Vagina (tissue), 2 donors: ENCODE measurements at regions of chr9 and their contacts with region 1.

Region 1: GRCh38 chr9:34611829-34612630 is at the start of gene RPP25L:
- DNase-seq: no peak
- H3K4me3 ChIP-seq: peak within 1 kb of the TSS; percentile 75 to 85
- H3K27ac ChIP-seq: peak within 1 kb of the TSS; percentile 94
- H3K4me1 ChIP-seq: peaks cover 23% of the 10 kb centered on the region
- H3K27me3 ChIP-seq: no peaks in the 10 kb centered on the region
- CTCF ChIP-seq: no peak
- POLR2A ChIP-seq: peak in 1 of 2 donors; percentile 82
- total RNA-seq, gene RPP25L: 31.4 TPM

Region 2: GRCh38 chr9:34446468-34446891 is 165.6 kb before region 1 on chr9:
- intact Hi-C with region 1: no loop called
- DNase-seq: no peak
- H3K4me3 ChIP-seq: no peak overlapping the region
- H3K27ac ChIP-seq: no peak overlapping the region
- H3K4me1 ChIP-seq: peaks cover 17% of the 10 kb centered on the region
- H3K27me3 ChIP-seq: no peaks in the 10 kb centered on the region
- CTCF ChIP-seq: no peak
- POLR2A ChIP-seq: no peak

Region 3: DNA sequence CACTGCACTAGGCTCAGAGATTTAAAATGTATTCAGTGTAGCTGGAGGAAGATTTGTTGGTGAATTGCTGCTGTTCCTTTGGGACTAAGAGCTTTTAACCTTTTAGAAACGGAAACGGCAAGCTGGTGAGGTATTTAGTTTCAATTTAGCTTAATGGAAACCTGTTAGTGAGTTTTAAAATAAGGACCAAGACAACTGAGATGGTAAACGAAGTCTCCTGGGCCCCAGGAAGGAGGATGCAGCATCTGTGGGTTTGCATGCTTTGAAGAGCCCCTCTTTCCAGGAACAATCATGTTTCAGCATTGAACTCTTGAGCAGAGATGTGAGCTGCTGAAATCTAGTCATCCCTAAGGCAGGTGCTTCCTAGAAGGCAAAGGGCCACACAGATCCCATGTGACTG is 136.9 kb before region 1 on chr9:
- intact Hi-C with region 1: no loop called
- DNase-seq: no peak
- H3K4me3 ChIP-seq: no peak overlapping the region
- H3K27ac ChIP-seq: no peak overlapping the region
- H3K4me1 ChIP-seq: no peaks in the 10 kb centered on the region
- H3K27me3 ChIP-seq: no peaks in the 10 kb centered on the region
- CTCF ChIP-seq: no peak
- POLR2A ChIP-seq: no peak

Region 4: DNA sequence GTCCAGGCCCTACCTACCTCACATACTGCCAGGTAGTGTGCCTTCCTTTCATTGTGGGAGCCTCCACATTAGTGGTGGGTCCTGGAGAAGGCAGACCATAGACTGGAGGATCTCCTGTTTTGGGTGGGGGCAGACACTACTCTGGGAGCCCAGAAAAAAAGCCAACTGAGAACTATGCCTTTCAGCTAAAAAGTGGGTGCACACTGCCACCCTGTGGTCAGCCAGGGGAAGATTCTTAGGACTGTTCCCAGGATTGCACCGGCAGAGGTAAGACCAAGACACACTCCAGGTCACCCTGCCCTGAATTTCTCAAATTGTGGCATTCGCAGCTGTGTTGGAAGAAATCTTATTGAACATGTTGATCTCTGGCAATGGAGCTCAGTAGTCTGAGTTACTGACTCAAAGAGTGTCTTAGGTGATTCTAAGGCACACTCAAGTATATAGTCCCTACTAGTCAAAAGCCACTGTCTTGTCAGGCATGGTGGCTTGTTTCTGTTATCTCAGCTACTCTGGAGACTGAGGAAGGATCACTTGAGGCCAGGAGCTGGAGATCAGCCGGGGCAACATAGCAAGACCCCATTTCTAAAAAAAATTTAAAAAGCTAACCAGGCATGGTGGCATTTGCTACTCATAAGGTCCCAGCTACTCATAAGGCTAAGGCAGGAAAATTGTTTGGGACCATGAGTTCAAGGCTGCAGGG is 22.0 kb after region 1 on chr9:
- intact Hi-C with region 1: loop called (anchors 2 kb)
- DNase-seq: no peak
- H3K4me3 ChIP-seq: no peak overlapping the region
- H3K27ac ChIP-seq: no peak overlapping the region
- H3K4me1 ChIP-seq: peaks cover 39% of the 10 kb centered on the region
- H3K27me3 ChIP-seq: no peaks in the 10 kb centered on the region
- CTCF ChIP-seq: peak; percentile 62 to 87 (median 70)
- POLR2A ChIP-seq: no peak